Activated naive CD8-positive, alpha-beta T cell treated with anti-CD3 and anti-CD28 coated beads, Interleukin-2, amount 10 ng/mL, durations not matched to agents 7 days and 5 days (primary cell): ENCODE measurements at regions of chr3 and their contacts with region 1.

Region 1: DNA sequence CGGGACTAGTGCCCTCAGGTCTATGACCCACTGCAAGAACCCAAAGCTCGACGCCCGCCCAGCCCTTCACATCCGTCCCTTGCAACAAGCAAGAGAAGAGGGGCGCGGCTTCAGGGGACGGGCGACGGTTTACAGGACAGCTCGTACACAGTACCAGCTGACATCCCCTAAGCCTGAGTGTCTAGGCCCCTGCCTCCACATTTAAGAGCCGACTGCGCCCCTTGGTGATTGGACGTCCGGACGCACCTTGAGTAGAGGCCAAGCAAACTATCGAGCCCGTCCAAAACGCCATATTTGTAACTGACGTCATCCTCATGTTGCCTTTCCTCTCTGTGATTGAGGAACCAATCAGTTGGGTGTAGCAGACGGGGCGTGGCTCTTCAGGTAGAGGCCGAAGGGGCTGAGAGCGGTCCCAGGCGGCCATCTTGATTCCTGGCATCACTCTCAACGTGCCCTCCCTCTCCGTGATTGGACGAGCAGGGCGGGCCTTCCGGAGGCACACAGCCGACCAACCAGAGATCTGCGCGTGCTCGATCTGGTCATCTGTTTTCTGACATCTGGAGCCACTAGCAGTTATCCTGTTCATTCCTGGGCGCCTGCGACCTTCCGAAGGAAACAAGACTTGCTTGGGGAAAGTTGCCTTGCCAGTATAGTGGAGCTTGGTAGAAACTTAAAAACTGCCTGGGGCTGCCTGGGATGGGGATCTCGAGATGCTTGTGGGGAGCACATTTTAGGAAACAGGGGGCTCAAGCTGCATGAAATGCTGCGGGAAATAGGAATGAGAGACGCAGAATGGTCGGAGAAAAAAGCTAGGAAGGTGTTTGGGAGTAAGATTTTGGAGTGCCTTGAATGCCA is 4.0 kb upstream of the RPL14 start:
- DNase-seq: peak; percentile 88
- ATAC-seq: peak; percentile 92
- H3K4me3 Mint-ChIP-seq: peak overlapping the region; percentile 86
- H3K27ac Mint-ChIP-seq: peak overlapping the region; percentile 98
- H3K4me1 Mint-ChIP-seq: peaks cover 27% of the 10 kb centered on the region
- H3K27me3 Mint-ChIP-seq: no peaks in the 10 kb centered on the region

Region 2: GRCh38 chr3:40476478-40477470 is 23.7 kb after region 1 on chr3 and contains the start of gene ZNF619:
- POLR2A ChIA-PET with region 1: interaction called, 21 read pairs
- DNase-seq: peak; percentile 67
- ATAC-seq: peak; percentile 89
- H3K4me3 Mint-ChIP-seq: peak within 1 kb of the TSS; percentile 86
- H3K27ac Mint-ChIP-seq: peak within 1 kb of the TSS; percentile 85
- H3K4me1 Mint-ChIP-seq: peaks cover 23% of the 10 kb centered on the region
- H3K27me3 Mint-ChIP-seq: no peaks in the 10 kb centered on the region
- total RNA-seq, gene ZNF619: 11.3 to 13.3 TPM

Region 3: GRCh38 chr3:40505599-40506462 is 52.7 kb after region 1 on chr3 and contains the start of gene ZNF620:
- POLR2A ChIA-PET with region 1: interaction called, 14 read pairs
- DNase-seq: peak; percentile 66
- ATAC-seq: peak; percentile 85
- H3K4me3 Mint-ChIP-seq: peak within 1 kb of the TSS; percentile 92
- H3K27ac Mint-ChIP-seq: peak within 1 kb of the TSS; percentile 93
- H3K4me1 Mint-ChIP-seq: peaks cover 18% of the 10 kb centered on the region
- H3K27me3 Mint-ChIP-seq: peaks cover 8% of the 10 kb centered on the region
- total RNA-seq, gene ZNF620: 4.5 to 7.2 TPM